HEK293 (cell line): ENCODE measurements at regions of chr1 and their contacts with region 1.

Region 1: DNA sequence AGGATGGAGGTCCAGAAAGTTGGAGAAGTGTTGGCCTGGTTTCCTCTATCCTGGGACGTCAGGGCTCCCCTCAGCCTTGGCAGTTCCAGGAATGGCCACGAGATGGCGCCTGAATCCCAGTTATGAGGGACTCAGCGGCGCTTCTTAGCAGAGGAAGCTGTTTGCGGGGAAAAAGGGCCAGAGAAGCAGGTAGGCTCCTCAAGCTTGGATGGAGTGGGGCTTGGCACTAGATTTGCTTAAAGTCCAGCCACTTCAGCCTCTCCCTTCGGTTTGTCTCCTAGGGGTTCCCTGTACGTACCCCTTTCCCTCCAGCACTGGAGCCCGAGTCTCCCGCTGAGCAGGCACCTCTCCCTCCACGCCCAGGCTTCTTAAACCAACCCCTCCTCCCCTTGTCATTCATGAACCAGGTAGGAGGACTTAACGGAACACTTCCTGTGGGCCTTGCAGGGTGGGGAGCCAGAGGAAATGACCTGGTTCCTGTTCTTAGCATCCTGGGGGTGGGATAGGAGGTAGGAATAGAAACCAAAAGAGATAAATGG is 32.0 kb upstream of the TENT5B start:
- H3K4me3 ChIP-seq: no peak overlapping the region
- H3K27ac ChIP-seq: no peak overlapping the region
- H3K4me1 ChIP-seq: no peaks in the 10 kb centered on the region
- CTCF ChIP-seq: peak; percentile 92

Region 2: DNA sequence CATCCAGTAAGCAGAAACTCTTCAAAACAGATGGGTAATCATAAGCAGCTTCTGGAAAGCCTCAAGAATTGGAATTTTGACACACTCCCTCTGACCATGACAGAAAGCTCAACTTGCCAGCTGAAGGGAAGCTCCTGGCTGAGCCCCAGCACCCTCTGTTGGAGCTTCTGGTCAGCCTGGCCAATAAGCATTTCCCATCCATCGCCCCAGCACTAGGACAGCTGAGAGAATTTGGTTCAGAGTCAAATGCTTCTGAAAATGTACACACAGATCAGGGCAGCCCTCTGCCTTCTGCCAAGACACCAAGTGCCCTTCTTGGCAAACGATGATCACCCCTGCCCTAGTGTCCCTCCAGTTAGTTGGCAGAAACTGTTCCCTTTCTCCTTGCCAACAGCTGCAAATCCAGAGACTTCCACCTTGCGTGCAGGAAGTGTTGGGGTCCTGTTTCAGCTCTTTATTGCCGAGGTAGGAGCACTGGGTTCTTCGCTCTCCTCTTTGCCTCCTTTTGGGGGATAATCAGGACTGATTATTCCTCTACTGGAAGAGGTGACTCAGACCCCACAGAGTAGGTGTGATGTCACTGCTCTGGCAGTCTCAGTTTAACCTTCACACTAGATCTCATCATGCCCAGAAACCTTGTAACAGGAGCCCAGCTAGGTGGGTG is 245.1 kb before region 1 on chr1:
- CTCF ChIA-PET with region 1: no interaction called
- POLR2A ChIA-PET with region 1: no interaction called
- H3K4me3 ChIP-seq: no peak overlapping the region
- H3K27ac ChIP-seq: no peak overlapping the region
- H3K4me1 ChIP-seq: peaks cover 3% of the 10 kb centered on the region; the same call in 1 of the 2 replicates
- CTCF ChIP-seq: no peak; the same call in 1 of the 2 replicates

Region 3: DNA sequence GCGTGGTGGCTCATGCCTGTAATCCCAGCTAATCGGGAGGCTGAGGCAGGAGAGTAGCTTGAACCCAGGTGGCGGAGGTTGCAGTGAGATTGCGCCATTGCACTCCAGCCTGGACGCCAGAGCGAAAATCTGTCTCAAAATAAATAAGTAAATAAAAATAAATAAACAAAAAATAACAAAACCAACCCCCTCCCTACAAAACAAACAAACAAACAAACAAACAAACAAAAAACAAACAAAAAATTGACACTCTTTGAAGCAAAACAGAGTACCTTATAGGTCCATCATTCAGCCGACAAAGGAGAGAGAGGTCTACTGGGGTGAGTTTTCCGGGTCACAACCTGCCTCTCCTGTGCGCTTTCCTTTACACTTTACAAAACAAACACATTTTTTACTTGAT is 79.0 kb before region 1 on chr1:
- CTCF ChIA-PET with region 1: interaction called, 37 read pairs
- POLR2A ChIA-PET with region 1: no interaction called
- H3K4me3 ChIP-seq: no peak overlapping the region
- H3K27ac ChIP-seq: no peak overlapping the region
- H3K4me1 ChIP-seq: no peaks in the 10 kb centered on the region
- CTCF ChIP-seq: no peak

Region 4: GRCh38 chr1:27031235-27032118 is 13.2 kb before region 1 on chr1:
- CTCF ChIA-PET with region 1: interaction called, 74 read pairs
- POLR2A ChIA-PET with region 1: no interaction called
- H3K4me3 ChIP-seq: no peak overlapping the region
- H3K27ac ChIP-seq: no peak overlapping the region
- H3K4me1 ChIP-seq: no peaks in the 10 kb centered on the region
- CTCF ChIP-seq: no peak

Region 5: DNA sequence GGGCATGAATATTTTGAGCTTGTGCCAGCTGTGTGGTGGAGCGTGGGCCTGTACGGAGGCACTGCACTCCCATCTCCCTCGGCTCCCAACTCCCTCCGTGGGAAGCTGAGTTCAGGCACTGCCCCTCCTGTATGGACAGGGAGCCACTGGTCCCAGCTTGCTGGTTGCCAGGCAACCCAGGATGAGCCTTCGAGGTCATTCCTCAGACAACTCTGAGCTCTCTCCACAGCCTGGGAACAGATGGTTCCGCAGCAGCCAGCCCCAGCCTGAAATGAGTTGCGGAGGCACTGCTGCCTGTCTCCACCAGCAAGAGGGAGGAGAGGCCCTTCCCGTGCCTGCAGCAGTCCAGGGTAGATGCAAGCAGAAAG is 26.4 kb after region 1 on chr1:
- CTCF ChIA-PET with region 1: interaction called, 18 read pairs
- POLR2A ChIA-PET with region 1: no interaction called
- H3K4me3 ChIP-seq: no peak overlapping the region
- H3K27ac ChIP-seq: no peak overlapping the region
- H3K4me1 ChIP-seq: no peaks in the 10 kb centered on the region
- CTCF ChIP-seq: no peak

Region 6: DNA sequence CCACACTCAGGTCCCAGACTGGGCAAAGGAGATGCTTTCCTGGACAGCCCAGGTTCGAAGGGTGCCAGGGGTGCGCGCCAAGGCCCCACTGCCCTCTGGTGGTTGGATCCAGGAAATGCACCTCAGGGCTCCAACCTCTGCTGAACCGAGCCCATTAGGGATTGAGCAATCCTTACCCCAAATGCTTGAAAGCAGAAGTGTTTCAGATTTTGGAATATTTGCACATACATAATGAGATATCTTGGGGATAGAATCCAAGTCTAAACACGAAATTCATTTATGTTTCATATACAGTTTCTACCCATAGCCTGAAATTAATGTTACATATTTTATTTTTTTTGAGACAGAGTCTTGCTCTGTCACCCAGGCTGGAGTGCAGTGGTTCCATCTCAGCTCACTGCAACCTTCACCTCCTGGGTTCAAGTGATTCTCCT is 52.8 kb after region 1 on chr1:
- CTCF ChIA-PET with region 1: interaction called, 329 read pairs
- POLR2A ChIA-PET with region 1: no interaction called
- H3K4me3 ChIP-seq: no peak overlapping the region
- H3K27ac ChIP-seq: no peak overlapping the region
- H3K4me1 ChIP-seq: peaks cover 8% of the 10 kb centered on the region
- CTCF ChIP-seq: peak; percentile 83

Region 7: DNA sequence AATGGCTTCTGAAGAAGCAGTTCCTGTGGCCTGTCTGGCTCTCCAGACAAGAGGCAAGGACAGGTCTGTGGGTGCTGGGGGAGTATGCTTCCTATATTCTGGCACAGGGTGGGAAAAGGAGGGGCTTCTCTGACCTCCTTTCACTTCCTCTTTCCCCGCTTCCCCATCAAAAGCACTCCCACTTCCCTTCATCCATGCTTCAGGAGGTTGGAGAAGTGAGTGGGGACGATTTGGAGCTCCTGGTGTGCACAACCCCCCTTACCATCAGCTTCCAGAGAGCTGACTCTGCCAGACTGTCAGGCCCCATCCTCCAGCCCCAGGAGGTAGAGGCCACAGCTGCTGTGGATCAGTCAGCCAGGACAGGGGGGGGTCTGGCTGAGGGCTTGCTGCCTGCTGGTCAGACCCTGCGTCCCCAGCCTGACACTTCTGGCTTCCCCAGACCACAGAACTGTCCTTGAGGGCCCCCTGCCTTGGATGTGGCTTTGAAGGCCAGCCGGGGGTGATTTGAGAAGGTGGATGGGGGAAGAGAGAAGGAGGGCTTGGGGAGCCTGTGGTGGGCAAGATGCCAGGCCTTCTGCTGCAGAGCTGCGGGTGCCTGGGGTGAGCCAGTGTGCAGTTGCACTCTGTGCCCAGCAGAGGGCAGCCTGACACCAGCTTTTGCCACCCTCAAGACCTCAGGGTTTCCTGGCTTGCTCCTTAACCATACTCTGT is 255.8 kb after region 1 on chr1:
- CTCF ChIA-PET with region 1: interaction called, 24 read pairs
- POLR2A ChIA-PET with region 1: no interaction called
- H3K4me3 ChIP-seq: no peak overlapping the region
- H3K27ac ChIP-seq: no peak overlapping the region
- H3K4me1 ChIP-seq: no peaks in the 10 kb centered on the region
- CTCF ChIP-seq: peak; percentile 92